MCF 10A (cell line): ENCODE measurements at regions of chr7 and their contacts with region 1.

Region 1: DNA sequence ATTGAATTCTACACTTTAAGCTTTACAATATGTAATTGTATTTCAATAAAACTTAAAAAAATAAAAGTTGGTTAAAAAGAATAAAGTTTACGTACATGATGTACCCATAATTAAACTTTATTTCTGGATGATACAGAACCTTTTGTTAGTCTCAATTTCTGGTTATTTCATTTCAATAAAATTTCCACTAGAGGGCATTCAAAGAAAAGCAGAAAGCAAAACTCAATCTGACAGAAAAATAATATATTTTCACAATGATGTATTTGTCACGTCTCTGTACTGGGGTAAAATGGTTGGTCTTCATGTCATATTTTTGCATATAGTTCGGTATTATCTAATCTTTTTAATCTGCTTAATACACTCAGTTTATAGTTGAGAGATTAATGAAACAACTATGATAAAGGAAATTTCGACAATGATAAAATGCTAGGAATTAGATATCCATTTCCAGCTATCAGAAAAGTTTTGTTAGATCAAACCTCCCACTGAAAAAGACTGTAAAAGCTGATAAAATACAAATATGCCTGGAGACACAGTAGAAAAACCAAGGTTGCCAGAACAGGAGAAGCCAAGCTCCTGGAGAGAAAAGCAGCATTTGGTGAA is 27.4 kb downstream of the ASZ1 start:
- DNase-seq: no peak
- H3K4me3 Mint-ChIP-seq: no peak overlapping the region
- H3K27ac Mint-ChIP-seq: no peak overlapping the region
- H3K4me1 Mint-ChIP-seq: no peaks in the 10 kb centered on the region
- H3K27me3 Mint-ChIP-seq: peaks cover 55% of the 10 kb centered on the region
- CTCF ChIP-seq: peak; percentile 40

Region 2: DNA sequence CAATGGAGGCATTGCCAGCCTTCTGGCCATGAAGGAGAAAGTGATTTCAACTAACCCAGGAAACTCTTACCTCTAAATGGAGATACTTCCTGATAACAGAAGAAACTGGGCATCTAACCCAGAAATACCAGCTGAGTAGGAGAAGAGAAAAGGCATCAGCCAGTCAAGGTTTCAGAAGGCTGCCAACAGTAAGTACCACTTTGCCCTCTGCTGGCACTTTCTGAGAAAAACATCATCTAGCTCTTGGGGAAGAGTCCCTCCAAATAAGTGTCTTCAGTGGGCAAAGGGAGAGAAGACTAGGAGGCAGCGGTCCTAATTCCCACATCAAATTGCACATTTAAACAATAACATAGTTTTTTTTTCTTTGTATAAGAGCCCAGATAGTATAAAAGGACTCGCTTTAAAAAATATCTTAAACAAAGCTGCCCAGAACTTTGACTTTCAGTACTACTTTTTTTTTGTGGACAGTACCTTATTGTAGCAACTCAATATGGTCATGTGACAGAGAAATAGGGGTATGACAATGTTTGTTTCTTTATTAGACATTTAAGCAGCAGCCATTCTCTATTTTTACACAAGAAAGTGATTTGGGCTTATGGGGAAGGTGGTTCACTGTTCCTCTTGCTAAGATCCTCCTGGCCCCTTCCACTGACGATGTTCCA is 316.0 kb after region 1 on chr7:
- CTCF ChIA-PET with region 1: interaction called, 14 read pairs
- POLR2A ChIA-PET with region 1: no interaction called
- intact Hi-C with region 1: loop called (anchors 1 kb)
- DNase-seq: peak; percentile 62
- H3K4me3 Mint-ChIP-seq: no peak overlapping the region
- H3K27ac Mint-ChIP-seq: no peak overlapping the region
- H3K4me1 Mint-ChIP-seq: no peaks in the 10 kb centered on the region
- H3K27me3 Mint-ChIP-seq: peaks cover 21% of the 10 kb centered on the region
- CTCF ChIP-seq: peak; percentile 48